ENCODE measurements at regions of chr4 and their contacts with region 1.

Region 1: GRCh38 chr4:147707865-147708672 is 23.8 kb upstream of the ARHGAP10 start:
- DNase-seq: peak in 1 of 2 donors; percentile 49
- ATAC-seq: peak; percentile 49

Region 2: DNA sequence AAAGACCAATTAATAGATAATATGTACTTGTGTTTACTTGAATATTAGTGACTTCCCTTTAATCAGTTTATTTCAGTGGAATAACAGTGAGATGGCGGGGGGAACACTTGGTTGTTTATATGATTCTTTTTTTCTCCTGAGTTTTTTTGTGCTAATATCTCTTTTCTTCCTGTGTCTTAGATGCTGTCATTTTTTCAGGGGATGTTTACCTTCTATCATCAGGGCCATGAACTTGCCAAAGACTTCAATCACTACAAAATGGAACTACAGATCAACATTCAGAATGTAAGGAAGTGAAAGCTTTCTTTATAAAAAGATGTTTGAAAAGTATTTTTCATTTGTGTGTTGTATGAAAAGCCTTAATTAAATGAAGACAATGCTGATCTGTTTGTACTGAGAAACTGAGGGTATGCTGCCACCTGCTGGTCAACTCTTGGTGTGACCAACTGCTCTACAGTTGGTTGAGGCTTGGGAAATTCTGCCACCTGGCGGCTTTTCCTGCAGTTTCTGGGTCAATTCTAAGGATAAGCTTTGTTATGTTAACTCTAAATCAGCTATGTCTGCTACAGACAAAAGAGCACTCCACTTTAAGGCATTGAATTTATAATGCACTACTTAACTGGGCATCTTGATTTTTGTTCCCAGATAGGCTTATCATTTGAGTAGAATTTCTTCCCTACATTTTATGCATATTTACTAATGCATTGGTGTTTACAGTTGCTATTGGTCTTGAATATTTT is 158.6 kb after region 1 on chr4:
- intact Hi-C with region 1: loop called in 1 of 2 experiments (anchors 2 kb)
- DNase-seq: peak; percentile 86 to 97
- ATAC-seq: peak; percentile 96